Endothelial cell of umbilical vein (primary cell): ENCODE measurements at regions of chr7 and their contacts with region 1.

Region 1: GRCh38 chr7:151057989-151058780 is 488 bp upstream of the CDK5 start:
- DNase-seq: peak; percentile 100
- H3K4me3 ChIP-seq: peak overlapping the region in 2 of 3 experiments; percentile 11 to 69
- H3K27ac ChIP-seq: peak overlapping the region; percentile 81
- H3K4me1 ChIP-seq: peaks cover 29% of the 10 kb centered on the region
- H3K27me3 ChIP-seq: no peaks in the 10 kb centered on the region
- CTCF ChIP-seq: no peak
- POLR2A ChIP-seq: peak; percentile 52

Region 2: DNA sequence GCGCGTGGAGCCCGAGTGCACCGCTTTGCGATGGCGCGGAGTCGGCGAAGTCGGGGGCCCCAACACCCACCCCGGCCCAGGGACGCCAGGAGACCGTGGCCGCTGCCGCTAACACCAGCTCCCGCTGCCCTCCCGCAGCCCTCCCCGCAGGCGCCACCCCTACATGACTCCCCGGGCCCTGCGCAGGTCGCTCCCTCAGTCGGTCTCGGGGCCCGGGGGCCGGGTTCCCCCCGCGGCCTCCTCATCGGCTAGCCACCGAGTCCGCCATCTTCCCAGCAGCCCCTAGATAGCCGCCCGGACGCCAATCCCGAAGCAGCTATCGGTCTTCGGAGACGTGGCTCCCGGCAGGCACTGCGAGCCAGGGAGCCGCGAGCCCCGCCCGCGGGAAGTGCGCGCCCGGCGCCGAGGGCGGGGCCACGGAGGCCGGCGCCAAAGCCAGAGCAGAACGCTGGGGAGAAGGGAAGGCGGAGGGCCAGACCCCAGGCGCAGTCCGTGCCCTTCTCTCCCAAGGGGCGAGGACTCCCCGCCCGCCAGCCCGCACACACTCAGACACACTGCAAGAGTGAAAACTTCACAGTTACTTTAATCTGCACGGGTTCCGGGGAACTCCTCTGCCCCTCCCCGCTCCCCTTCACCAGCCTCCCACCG is 22.5 kb after region 1 on chr7 and contains the start of gene FASTK:
- CTCF ChIA-PET with region 1: interaction called, 3 read pairs
- POLR2A ChIA-PET with region 1: no interaction called
- dilution Hi-C with region 1: no loop called
- intact Hi-C with region 1: loop called (anchors 1 kb)
- DNase-seq: peak; percentile 91
- H3K4me3 ChIP-seq: peak within 1 kb of the TSS; percentile 29 to 75 (median 53)
- H3K27ac ChIP-seq: peak within 1 kb of the TSS; percentile 53
- H3K4me1 ChIP-seq: peaks cover 39% of the 10 kb centered on the region
- H3K27me3 ChIP-seq: no peaks in the 10 kb centered on the region
- CTCF ChIP-seq: no peak
- POLR2A ChIP-seq: peak; percentile 84
- total RNA-seq, gene FASTK: 71.6 and 73.3 TPM in 2 replicates

Region 3: DNA sequence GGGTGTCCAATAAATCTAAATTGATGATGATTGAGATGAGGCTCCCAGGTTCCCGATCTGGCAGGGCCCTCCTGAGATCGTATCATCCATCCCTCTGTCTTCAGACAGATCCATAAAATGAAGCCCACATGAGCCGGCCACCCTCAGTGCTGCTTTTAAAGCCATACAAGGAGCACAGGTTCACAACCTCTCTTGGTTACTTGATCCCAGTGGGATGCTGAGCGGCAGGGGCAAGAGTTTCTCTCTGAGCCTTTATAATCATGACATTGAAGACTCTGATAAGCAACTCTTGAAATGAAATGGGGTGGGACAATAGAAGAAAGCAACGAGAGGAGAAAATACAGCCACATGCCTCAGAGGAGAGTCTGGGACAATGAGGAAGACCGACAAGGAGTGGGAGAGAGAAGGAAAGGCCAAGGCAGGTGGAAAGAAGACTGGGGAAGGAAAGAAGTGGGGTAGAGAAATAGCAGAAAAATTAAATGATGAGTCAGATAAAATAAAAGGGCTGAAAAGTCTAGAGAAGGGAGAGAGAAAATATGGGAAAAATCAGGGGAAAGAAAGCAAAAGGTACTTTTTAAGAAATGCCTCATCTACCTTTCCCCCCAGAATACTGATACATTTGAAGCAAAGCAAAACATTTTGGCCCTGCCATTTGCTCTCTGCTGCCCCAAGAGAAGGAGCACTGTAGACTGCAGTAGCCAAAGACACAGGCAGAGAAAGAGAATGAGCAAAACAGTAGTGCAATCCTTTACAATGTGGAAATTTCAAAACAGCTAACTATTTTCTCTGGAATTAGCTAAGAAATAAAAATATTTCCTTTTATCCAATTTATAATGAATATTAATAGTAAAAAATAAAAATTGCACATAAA is 94.7 kb after region 1 on chr7:
- CTCF ChIA-PET with region 1: no interaction called
- POLR2A ChIA-PET with region 1: no interaction called
- dilution Hi-C with region 1: no loop called
- intact Hi-C with region 1: no loop called
- DNase-seq: no peak
- H3K4me3 ChIP-seq: no peak overlapping the region
- H3K27ac ChIP-seq: no peak overlapping the region
- H3K4me1 ChIP-seq: peaks cover 4% of the 10 kb centered on the region
- H3K27me3 ChIP-seq: peaks cover 20 to 56% of the 10 kb centered on the region in 2 experiments
- CTCF ChIP-seq: peak in 1 of 2 donors; percentile 15
- POLR2A ChIP-seq: no peak